ENCODE measurements at regions of chr2 and their contacts with region 1.

Region 1: GRCh38 chr2:74178201-74179062 is at the start of gene MOB1A:
- DNase-seq: peak; percentile 99 to 100
- H3K4me3 ChIP-seq: peak within 1 kb of the TSS; percentile 60
- H3K4me3 Mint-ChIP-seq: peak within 1 kb of the TSS; percentile 78
- H3K27ac Mint-ChIP-seq: peak within 1 kb of the TSS; percentile 46
- H3K4me1 ChIP-seq: 0 out of 2 replicates have a peak, but pooled peaks cover 4% of the 10 kb centered on the region
- H3K4me1 Mint-ChIP-seq: no peaks in the 10 kb centered on the region
- H3K27me3 ChIP-seq: no peaks in the 10 kb centered on the region
- H3K27me3 Mint-ChIP-seq: no peaks in the 10 kb centered on the region
- CTCF ChIP-seq: no peak
- total RNA-seq, gene MOB1A: 113 and 125 TPM in 2 replicates

Region 2: DNA sequence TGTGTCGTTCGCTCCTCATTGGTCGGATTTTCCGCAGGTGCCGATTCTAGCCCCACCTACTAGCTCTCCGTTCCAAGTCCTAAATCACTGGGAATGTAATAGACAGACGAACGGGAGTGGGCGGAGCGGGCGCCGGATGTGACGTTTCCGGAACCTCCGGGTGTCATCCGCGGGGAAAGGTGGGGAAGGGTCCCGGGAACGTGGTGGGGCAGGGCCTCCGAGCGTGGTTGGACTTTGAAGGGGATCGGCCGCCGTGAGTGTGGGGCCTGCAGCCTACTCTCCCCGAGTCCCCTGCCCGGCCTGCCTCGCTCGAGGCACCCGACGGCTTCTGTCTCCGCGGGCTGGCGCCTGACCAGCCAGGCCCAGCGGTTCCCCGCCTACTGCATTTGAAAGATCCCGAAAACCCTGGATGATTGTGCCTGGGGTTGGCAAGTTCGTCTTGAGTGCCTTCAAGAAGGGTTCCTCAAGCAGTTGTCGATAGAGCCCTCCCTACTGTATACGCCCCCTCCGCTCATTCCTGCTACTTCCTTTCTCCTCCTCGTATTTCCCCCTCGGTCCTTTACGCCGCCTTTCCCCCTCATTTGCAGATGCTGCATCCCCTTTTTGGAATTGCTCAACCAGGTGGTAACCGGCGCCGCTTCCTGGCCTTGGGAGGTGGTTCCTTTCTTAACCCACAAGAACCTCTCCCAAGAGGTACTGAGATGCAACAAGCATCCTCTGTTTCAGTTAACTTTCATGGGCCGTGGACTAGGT is 349.4 kb before region 1 on chr2 and contains the start of gene STAMBP:
- CTCF ChIA-PET with region 1: interaction called, 5 read pairs
- POLR2A ChIA-PET with region 1: interaction called, 23 read pairs
- intact Hi-C with region 1: no loop called
- DNase-seq: peak; percentile 96
- H3K4me3 ChIP-seq: peak within 1 kb of the TSS; percentile 75
- H3K4me3 Mint-ChIP-seq: peak within 1 kb of the TSS; percentile 84
- H3K27ac Mint-ChIP-seq: peak within 1 kb of the TSS; percentile 93
- H3K4me1 ChIP-seq: peaks cover 3% of the 10 kb centered on the region; the same call in 1 of the 2 replicates
- H3K4me1 Mint-ChIP-seq: peaks cover 9% of the 10 kb centered on the region
- H3K27me3 ChIP-seq: no peaks in the 10 kb centered on the region
- H3K27me3 Mint-ChIP-seq: no peaks in the 10 kb centered on the region
- CTCF ChIP-seq: no peak
- total RNA-seq, gene STAMBP: 49.8 and 50.1 TPM in 2 replicates

Region 3: GRCh38 chr2:74198461-74199274 is 20.2 kb after region 1 on chr2 and contains the start of gene MTHFD2:
- CTCF ChIA-PET with region 1: interaction called, 7 read pairs
- POLR2A ChIA-PET with region 1: interaction called, 19 read pairs
- intact Hi-C with region 1: loop called (anchors 1 kb)
- DNase-seq: peak; percentile 98
- H3K4me3 ChIP-seq: peak within 1 kb of the TSS; percentile 80
- H3K4me3 Mint-ChIP-seq: peak within 1 kb of the TSS; percentile 91
- H3K27ac Mint-ChIP-seq: peak within 1 kb of the TSS; percentile 100
- H3K4me1 ChIP-seq: peaks cover 12% of the 10 kb centered on the region
- H3K4me1 Mint-ChIP-seq: peaks cover 26% of the 10 kb centered on the region
- H3K27me3 ChIP-seq: no peaks in the 10 kb centered on the region
- H3K27me3 Mint-ChIP-seq: no peaks in the 10 kb centered on the region
- CTCF ChIP-seq: peak; percentile 90
- total RNA-seq, gene MTHFD2: 416 and 470 TPM in 2 replicates

Region 4: GRCh38 chr2:74226648-74227213 is 48.3 kb after region 1 on chr2:
- CTCF ChIA-PET with region 1: no interaction called
- POLR2A ChIA-PET with region 1: no interaction called
- intact Hi-C with region 1: no loop called
- DNase-seq: no peak
- H3K4me3 ChIP-seq: no peak overlapping the region
- H3K4me3 Mint-ChIP-seq: peak overlapping the region; percentile 17
- H3K27ac Mint-ChIP-seq: peak overlapping the region; percentile 58
- H3K4me1 ChIP-seq: no peaks in the 10 kb centered on the region
- H3K4me1 Mint-ChIP-seq: peaks cover 7% of the 10 kb centered on the region
- H3K27me3 ChIP-seq: no peaks in the 10 kb centered on the region
- H3K27me3 Mint-ChIP-seq: no peaks in the 10 kb centered on the region
- CTCF ChIP-seq: no peak

Measured in Caco-2 (cell line).